ENCODE measurements at regions of chr22 and their contacts with region 1.

Region 1: GRCh38 chr22:28402539-28402938 is 277.1 kb downstream of the TTC28 start:
- DNase-seq: peak; percentile 5
- H3K4me3 Mint-ChIP-seq: no peak overlapping the region
- H3K27ac Mint-ChIP-seq: peak overlapping the region; percentile 67
- H3K4me1 Mint-ChIP-seq: peaks cover 9% of the 10 kb centered on the region
- H3K27me3 Mint-ChIP-seq: no peaks in the 10 kb centered on the region

Region 2: DNA sequence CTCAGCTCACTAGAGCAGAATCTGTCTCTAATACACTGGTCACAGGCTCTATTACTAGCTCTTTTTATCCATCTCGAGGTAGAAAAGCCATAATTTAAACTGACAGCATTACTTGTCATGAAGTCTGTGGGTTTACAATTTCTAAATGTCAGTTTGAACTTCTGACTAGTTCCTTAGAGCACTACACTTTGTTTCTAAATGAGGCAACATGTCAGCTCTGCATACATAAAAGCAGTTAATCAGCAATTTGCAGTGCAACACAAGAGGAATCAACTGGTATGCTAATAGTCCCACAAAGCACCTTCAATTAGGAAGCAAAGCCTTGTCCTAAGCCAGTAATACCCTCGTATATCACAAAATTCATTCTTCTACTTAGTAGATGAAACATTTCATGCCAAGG is 44.2 kb before region 1 on chr22:
- CTCF ChIA-PET with region 1: no interaction called
- intact Hi-C with region 1: no loop called
- DNase-seq: no peak
- H3K4me3 Mint-ChIP-seq: no peak overlapping the region
- H3K27ac Mint-ChIP-seq: no peak overlapping the region
- H3K4me1 Mint-ChIP-seq: peaks cover 6% of the 10 kb centered on the region
- H3K27me3 Mint-ChIP-seq: no peaks in the 10 kb centered on the region

Region 3: DNA sequence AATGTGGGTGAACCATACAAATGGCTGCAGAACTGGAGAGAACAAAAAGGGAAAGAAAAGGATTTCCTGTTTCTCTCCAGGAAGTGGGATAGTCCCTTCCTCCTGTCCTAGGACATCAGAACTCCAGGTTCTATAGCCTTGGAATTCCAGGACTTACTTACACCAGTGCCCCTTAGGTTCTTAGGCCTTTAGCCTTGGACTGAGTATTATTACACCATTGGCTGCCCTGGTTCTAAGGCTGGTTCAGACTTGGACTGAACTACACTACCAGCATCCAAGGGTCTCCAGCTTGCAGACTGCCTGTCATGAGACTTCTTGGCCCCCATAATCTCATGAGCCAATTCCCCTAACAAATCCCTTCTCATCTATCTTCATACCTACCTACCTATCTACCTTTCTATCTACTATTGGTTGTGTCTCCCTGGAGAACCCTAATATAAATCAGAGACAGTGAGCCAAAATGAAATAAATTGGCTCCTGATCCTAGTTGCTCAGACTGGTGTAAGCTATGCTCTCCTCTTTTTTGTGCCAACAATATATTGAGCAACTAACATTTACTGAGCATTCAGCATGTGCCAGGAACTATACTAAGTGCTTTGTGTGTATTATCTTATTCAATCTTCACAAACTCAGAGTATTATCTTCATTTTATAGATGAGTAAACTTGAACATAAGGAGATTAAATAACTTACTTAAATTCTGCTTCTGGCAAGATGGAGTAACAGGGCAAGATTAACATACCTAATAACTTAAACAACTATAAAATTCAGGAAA is 26.6 kb before region 1 on chr22:
- CTCF ChIA-PET with region 1: no interaction called
- intact Hi-C with region 1: loop called (anchors 1 kb)
- DNase-seq: no peak
- H3K4me3 Mint-ChIP-seq: no peak overlapping the region
- H3K27ac Mint-ChIP-seq: no peak overlapping the region
- H3K4me1 Mint-ChIP-seq: peaks cover 21% of the 10 kb centered on the region
- H3K27me3 Mint-ChIP-seq: no peaks in the 10 kb centered on the region

Region 4: DNA sequence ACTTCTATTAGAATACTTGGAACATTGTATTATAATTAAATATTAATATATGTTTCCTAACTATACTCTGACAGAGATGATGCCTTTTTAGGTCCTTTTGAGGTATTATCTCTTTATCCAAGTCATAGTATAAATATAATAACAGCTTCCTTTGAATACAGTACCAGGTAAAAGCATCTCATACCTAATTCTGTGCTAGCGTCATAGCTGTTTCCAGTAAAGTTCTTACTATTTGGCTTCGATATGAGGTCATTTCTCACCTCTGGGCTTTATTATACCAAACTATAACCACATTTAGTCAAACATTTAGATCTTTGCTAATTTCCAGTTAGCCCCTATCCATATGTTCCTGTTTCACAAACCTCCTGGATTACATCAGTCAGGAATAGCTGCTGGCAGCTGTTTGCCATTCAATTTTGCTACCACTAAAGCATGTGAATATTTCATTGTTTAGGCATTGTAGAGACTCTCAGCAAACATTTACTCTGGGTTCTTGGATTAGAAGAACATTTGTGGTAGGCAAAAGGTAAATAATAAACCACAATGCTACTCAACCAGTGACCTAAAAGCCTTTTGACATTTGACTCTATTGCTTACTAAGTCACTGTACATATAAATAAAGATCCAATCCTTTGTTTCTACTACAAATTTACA is 22.0 kb after region 1 on chr22:
- CTCF ChIA-PET with region 1: interaction called, 3 read pairs
- intact Hi-C with region 1: loop called (anchors 1 kb)
- DNase-seq: no peak
- H3K4me3 Mint-ChIP-seq: no peak overlapping the region
- H3K27ac Mint-ChIP-seq: no peak overlapping the region
- H3K4me1 Mint-ChIP-seq: no peaks in the 10 kb centered on the region
- H3K27me3 Mint-ChIP-seq: no peaks in the 10 kb centered on the region

Region 5: GRCh38 chr22:30159561-30160353 is 1757.2 kb after region 1 on chr22:
- CTCF ChIA-PET with region 1: no interaction called
- intact Hi-C with region 1: no loop called
- DNase-seq: no peak
- H3K4me3 Mint-ChIP-seq: no peak overlapping the region
- H3K27ac Mint-ChIP-seq: peak overlapping the region; percentile 93
- H3K4me1 Mint-ChIP-seq: peaks cover 63% of the 10 kb centered on the region
- H3K27me3 Mint-ChIP-seq: no peaks in the 10 kb centered on the region